MCF 10A (cell line): ENCODE measurements at regions of chr1 and their contacts with region 1.

Region 1: GRCh38 chr1:30779294-30780071 is 21.9 kb upstream of the LAPTM5 start:
- DNase-seq: peak; percentile 80
- H3K4me3 Mint-ChIP-seq: no peak overlapping the region
- H3K27ac Mint-ChIP-seq: peak overlapping the region; percentile 14
- H3K4me1 Mint-ChIP-seq: peaks cover 30% of the 10 kb centered on the region
- H3K27me3 Mint-ChIP-seq: no peaks in the 10 kb centered on the region
- CTCF ChIP-seq: peak; percentile 94

Region 2: GRCh38 chr1:30718636-30719405 is 60.7 kb before region 1 on chr1:
- CTCF ChIA-PET with region 1: interaction called, 198 read pairs
- POLR2A ChIA-PET with region 1: interaction called, 40 read pairs
- intact Hi-C with region 1: loop called (anchors 1 kb)
- DNase-seq: peak; percentile 96
- H3K4me3 Mint-ChIP-seq: peak overlapping the region; percentile 89
- H3K27ac Mint-ChIP-seq: peak overlapping the region; percentile 91
- H3K4me1 Mint-ChIP-seq: peaks cover 5% of the 10 kb centered on the region
- H3K27me3 Mint-ChIP-seq: no peaks in the 10 kb centered on the region
- CTCF ChIP-seq: peak; percentile 96

Region 3: DNA sequence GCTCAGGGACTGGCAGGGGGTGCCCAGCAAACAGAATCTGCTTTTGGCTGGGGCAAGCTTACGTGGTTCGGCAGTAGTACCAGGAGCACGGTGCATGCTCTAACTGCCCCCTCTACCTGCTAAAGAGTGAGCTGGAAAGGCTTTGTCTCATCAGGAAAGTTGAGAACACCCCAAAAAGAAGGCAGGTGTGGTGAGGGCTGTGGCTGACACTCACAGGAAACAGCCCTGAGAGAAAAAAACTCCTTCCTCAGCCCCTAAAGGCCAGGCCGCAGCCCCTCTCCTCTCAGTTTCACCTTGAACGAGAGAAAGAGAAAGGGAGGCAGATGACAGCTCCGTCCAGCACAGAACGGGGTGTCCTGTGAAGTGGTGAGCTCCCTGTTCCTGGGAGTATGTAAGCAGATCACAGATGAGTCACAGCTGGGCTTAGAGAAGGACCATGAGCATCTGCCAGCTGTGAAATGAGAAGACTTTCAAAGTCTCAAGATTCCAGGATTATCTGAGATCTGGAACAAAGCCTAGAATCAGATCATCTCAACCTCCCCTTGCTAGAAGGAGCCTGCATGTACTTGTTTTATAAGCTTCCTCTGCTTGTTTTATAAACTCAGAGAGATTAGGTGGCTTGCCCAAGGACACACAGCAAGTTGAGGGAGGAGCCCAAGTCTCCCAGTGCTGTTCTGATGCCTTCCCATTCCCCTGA is 35.3 kb before region 1 on chr1:
- CTCF ChIA-PET with region 1: interaction called, 13 read pairs
- POLR2A ChIA-PET with region 1: interaction called, 3 read pairs
- intact Hi-C with region 1: no loop called
- DNase-seq: no peak
- H3K4me3 Mint-ChIP-seq: no peak overlapping the region
- H3K27ac Mint-ChIP-seq: no peak overlapping the region
- H3K4me1 Mint-ChIP-seq: peaks cover 45% of the 10 kb centered on the region
- H3K27me3 Mint-ChIP-seq: no peaks in the 10 kb centered on the region
- CTCF ChIP-seq: no peak

Region 4: GRCh38 chr1:30768830-30769718 is 10.4 kb before region 1 on chr1:
- CTCF ChIA-PET with region 1: interaction called, 5 read pairs
- POLR2A ChIA-PET with region 1: interaction called, 10 read pairs
- intact Hi-C with region 1: no loop called
- DNase-seq: no peak
- H3K4me3 Mint-ChIP-seq: no peak overlapping the region
- H3K27ac Mint-ChIP-seq: peak overlapping the region; percentile 75
- H3K4me1 Mint-ChIP-seq: peaks cover 4% of the 10 kb centered on the region
- H3K27me3 Mint-ChIP-seq: no peaks in the 10 kb centered on the region
- CTCF ChIP-seq: no peak

Region 5: DNA sequence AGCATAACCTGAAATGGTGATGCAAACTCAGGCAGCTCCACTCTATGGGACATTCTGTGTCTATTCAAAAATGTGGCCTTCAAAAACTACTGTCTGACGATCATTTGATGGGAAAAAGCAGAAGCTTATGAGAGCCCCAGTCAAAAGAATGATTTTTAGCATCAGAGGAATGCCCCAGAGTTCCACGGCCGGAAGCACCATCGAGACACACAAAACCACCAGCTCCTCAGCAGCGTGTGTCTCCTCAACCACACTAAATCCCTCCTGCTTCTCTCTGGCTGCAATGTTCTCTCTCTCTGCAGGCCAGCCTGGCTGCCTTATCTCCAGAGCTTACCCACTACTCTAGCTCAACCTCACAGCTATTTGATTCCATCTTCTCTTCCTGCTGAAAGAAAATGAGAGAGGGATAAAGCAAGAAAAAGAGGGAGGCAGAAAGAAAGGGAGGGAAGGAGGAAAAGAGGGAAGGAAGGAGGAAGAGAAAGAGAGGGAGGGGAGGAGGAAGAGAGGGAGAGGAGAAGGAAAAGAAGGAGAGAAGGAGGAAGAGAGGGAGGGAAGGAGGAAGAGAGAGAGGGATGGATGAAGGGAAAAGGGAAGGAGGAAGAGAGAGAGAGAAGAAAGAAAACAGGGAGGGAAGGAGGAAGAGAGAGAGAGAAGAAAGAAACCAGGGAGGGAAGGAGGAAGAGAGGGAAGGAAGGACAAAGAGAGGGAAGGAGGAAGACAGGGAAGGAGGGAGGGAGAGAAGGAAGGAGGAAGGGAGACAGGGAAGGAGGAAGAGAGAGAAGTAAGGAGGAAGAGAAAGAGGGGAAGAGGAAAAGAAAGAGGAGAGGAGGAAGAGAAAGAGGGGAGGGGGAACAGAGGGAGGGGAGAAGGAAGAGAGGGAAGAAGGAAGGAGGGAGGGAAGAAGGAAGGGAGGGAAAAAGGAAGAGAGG is 11.6 kb after region 1 on chr1:
- CTCF ChIA-PET with region 1: interaction called, 12 read pairs
- POLR2A ChIA-PET with region 1: interaction called, 26 read pairs
- intact Hi-C with region 1: no loop called
- DNase-seq: no peak
- H3K4me3 Mint-ChIP-seq: no peak overlapping the region
- H3K27ac Mint-ChIP-seq: peak overlapping the region; percentile 100
- H3K4me1 Mint-ChIP-seq: peaks cover 48% of the 10 kb centered on the region
- H3K27me3 Mint-ChIP-seq: no peaks in the 10 kb centered on the region
- CTCF ChIP-seq: no peak

Region 6: GRCh38 chr1:30911046-30911954 is 131.8 kb after region 1 on chr1:
- CTCF ChIA-PET with region 1: interaction called, 118 read pairs
- POLR2A ChIA-PET with region 1: interaction called, 19 read pairs
- intact Hi-C with region 1: loop called (anchors 1 kb)
- DNase-seq: peak; percentile 91
- H3K4me3 Mint-ChIP-seq: no peak overlapping the region
- H3K27ac Mint-ChIP-seq: no peak overlapping the region
- H3K4me1 Mint-ChIP-seq: peaks cover 15% of the 10 kb centered on the region
- H3K27me3 Mint-ChIP-seq: no peaks in the 10 kb centered on the region
- CTCF ChIP-seq: peak; percentile 85

Region 7: GRCh38 chr1:30991862-30992606 is 212.6 kb after region 1 on chr1:
- CTCF ChIA-PET with region 1: no interaction called
- POLR2A ChIA-PET with region 1: no interaction called
- intact Hi-C with region 1: no loop called
- DNase-seq: no peak
- H3K4me3 Mint-ChIP-seq: no peak overlapping the region
- H3K27ac Mint-ChIP-seq: no peak overlapping the region
- H3K4me1 Mint-ChIP-seq: peaks cover 40% of the 10 kb centered on the region
- H3K27me3 Mint-ChIP-seq: no peaks in the 10 kb centered on the region
- CTCF ChIP-seq: no peak

Region 8: DNA sequence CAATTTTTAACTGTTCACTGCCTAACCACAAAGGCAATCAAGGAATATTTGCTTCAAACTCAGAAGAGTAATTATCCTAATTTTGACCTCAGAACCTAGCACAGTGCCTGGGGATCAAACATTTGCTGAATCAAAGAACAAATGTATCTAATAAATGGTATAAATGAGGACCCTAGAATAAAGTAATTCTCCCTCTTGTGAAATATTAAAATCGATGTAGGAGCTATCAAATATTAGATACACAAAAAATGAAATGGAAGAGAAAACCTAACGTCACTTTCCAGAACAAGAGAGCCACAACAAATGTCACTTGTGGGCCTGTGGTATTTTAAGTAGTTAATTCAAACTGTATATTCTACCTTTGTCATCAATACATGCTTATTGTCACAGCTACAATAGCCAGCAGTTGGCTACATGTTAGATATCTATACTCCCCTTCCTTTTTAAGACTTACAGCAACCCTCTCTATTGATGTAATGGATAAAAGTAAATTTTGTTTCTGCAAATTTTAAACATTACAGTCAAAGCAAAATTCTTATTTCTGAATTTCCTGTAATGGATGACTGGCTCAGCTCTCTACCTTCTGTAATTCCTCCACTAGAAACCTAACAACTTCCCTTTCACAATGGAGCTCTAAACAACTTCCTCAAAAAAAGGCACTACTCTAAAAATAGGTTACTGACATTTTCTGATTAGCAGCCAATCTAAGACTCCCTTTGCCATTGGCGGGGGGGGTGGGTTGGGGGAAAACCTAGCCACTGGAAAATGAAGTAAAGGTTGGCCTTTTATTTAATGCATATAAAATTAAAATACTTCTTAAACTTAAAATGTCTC is 248.4 kb after region 1 on chr1:
- CTCF ChIA-PET with region 1: no interaction called
- POLR2A ChIA-PET with region 1: no interaction called
- intact Hi-C with region 1: no loop called
- DNase-seq: no peak
- H3K4me3 Mint-ChIP-seq: no peak overlapping the region
- H3K27ac Mint-ChIP-seq: no peak overlapping the region
- H3K4me1 Mint-ChIP-seq: peaks cover 28% of the 10 kb centered on the region
- H3K27me3 Mint-ChIP-seq: no peaks in the 10 kb centered on the region
- CTCF ChIP-seq: no peak